ENCODE measurements at regions of chr18 and their contacts with region 1.

Region 1: GRCh38 chr18:30870466-30870865 is 172.1 kb downstream of the DSC3 start:
- DNase-seq: no peak
- ATAC-seq: no peak

Region 2: DNA sequence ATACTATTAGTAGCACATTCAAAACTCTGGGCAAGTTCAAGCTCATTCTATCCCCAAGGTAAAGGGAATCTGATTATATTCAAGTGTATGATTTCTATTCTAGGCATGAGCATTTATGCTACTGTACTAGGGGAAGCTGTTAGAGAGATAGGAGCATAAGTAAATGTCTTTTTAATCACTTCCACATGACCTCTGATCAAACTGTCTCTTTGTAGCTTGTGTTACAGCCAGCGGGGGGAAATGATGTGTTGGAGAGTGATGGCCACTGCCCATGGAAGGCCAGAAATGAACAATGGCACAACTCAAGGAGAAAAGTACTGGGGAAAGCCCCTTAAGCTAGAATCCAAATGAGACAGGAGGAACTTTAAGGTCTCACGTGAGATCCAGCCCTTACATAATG is 1798.6 kb before region 1 on chr18:
- intact Hi-C with region 1: loop called (anchors 5 kb)
- DNase-seq: no peak
- ATAC-seq: no peak

Region 3: GRCh38 chr18:31030574-31031278 is 160.3 kb after region 1 on chr18:
- intact Hi-C with region 1: no loop called
- DNase-seq: no peak
- ATAC-seq: no peak

Region 4: DNA sequence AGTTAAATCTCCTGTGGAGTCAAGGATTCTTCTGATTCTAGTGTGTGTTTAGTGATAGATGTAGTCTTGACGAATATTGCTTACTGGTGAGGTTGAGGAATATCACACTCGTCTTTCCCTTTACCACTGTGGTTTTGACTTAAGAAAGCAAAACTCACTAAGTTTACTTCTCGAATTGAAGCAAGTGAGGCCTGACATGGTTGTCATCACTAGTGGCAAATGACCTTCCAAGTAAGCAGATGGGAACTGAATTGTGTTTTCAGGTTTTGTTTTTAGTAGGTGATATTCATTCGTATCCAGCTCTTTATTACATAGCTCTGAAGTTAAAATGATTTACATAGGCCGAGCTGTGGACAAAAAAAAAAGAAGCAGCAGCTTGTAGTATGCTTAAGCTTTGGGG is 485.6 kb after region 1 on chr18:
- intact Hi-C with region 1: no loop called
- DNase-seq: no peak
- ATAC-seq: no peak